ENCODE measurements at regions of chr3 and their contacts with region 1.

Region 1: DNA sequence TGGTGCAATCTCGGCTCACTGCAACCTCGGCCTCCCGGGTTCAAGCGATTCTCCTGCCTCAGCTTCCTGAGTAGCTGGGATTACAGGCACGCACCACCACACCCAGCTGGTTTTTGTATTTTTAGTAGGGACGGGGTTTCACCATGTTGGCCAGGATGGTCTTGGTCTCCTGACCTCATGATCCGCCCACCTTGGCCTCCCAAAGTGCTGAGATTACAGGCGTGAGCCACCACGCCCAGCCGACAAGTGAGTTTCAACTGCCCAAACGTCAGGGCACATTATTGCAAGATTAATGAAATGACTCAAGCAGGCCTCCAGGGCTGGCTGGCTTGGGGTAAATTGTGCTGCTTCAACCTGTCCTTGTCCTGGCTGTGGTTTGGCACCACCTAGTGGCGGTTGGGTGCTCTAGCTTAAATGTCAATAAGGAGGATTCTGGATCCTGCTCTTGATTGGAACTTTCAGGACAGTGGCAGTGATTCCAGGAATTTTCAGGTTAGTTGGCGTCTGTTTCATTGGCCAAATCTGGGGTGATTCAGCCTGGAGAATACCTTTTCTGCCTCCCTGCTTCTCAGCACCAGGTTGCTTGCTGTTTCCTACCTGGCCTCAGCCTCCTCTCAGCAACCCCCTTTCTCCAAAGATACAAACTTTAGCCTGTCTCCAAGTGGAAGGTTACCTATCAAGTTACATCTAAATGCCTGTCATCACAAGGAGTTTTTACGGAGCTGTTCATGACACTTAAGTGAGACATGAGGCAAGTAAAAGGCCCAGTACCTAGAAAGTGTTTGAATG is 32.4 kb upstream of the SACM1L start:
- DNase-seq: peak; percentile 79
- CTCF ChIP-seq: peak; percentile 81

Region 2: GRCh38 chr3:45037734-45038455 is 618.9 kb before region 1 on chr3:
- in situ Hi-C with region 1: loop called (anchors 25 kb)
- DNase-seq: peak; percentile 91
- CTCF ChIP-seq: peak; percentile 95

Region 3: DNA sequence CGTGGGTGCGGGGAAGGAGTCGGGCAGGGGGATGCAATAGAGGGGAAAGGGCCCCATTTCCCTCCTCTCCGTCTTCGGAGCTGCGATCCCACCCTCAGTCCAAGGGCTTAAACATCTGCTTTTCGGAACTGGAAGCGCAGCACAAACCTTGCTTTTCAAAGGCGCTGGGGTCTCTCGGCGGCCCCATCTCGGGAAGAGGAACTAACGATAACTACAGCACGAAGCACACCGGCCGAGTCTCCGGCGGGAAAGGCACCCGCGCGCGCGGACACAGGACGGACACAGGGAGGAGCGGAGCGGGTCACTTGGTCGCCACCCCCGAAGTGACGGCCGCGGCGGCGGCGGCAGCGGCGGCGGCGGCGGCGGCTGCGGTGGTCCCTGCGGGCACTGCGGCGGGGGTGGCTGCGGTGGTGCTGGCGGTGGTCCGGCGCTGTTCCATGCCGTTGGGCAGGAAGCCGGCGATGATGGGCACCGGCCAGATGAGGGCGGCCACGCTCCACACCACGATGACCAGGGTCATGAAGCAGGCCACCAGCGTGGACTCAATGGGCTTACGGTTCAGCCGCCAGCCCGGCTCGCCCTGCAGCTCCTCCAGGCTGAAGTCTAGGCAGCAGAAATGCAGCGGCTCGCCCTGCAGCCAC is 431.8 kb before region 1 on chr3:
- in situ Hi-C with region 1: loop called (anchors 25 kb)
- DNase-seq: peak; percentile 77
- CTCF ChIP-seq: peak; percentile 68

Region 4: GRCh38 chr3:45507820-45508317 is 148.9 kb before region 1 on chr3:
- in situ Hi-C with region 1: loop called (anchors 5 kb)
- DNase-seq: no peak
- CTCF ChIP-seq: no peak

Measured in GM13976 (cell line).